SK-N-SH (cell line): ENCODE measurements at regions of chr1 and their contacts with region 1.

Region 1: DNA sequence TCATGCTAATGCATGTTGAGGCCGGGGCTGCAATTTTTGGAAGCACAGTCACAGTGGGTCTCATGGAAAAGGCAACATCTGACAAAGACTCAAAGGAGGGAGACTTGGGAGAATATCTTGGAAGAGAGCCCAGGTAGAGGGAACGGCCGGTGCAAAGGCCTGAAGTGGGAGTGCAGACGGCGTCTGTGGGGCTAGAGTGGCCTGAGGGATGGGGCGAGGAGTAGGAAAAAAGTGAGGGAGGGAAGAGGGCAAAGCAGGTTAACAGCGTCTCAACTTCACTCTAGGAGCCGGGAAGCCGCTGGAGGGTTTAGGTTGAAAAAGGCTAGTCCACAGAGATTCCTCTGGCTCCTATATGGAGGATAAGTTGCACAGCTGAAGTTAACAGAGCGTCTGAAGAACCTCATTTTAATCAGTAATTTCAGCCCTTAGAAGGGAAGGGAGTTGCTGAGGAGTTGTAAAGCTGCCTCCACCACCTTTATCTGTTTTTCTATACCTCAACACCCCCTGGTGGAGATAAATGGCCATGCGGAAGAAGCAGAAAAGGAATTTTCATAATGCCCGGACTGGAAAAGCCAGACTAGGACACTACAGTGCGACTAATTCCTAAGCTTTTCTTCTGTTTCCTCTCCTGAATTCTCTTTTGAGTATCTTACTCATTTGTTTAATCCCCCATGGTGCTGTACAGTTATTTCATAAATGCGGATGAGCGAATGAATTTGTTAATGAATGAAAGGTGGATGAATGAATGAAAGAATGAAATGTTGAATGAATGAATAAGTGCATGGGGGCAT is 78.7 kb upstream of the ZNF281 start:
- DNase-seq: peak; percentile 73
- H3K4me3 ChIP-seq: no peak overlapping the region
- H3K27ac ChIP-seq: no peak overlapping the region
- H3K4me1 ChIP-seq: peaks cover 2 to 4% of the 10 kb centered on the region in 2 experiments; a peak in 3 of 4 replicates
- H3K27me3 ChIP-seq: no peaks in the 10 kb centered on the region
- CTCF ChIP-seq: peak; percentile 94
- EP300 ChIP-seq: no peak
- RAD21 ChIP-seq: peak; percentile 96

Region 2: GRCh38 chr1:199684686-199685273 is 803.8 kb before region 1 on chr1:
- CTCF ChIA-PET with region 1: interaction called, 34 read pairs
- POLR2A ChIA-PET with region 1: no interaction called
- DNase-seq: peak; percentile 46
- H3K4me3 ChIP-seq: no peak overlapping the region; a peak in 1 of 4 replicates
- H3K27ac ChIP-seq: no peak overlapping the region
- H3K4me1 ChIP-seq: peaks cover 2 to 16% of the 10 kb centered on the region in 2 experiments; a peak in 2 of 4 replicates
- H3K27me3 ChIP-seq: no peaks in the 10 kb centered on the region
- CTCF ChIP-seq: peak; percentile 92
- EP300 ChIP-seq: no peak
- RAD21 ChIP-seq: peak; percentile 93

Region 3: DNA sequence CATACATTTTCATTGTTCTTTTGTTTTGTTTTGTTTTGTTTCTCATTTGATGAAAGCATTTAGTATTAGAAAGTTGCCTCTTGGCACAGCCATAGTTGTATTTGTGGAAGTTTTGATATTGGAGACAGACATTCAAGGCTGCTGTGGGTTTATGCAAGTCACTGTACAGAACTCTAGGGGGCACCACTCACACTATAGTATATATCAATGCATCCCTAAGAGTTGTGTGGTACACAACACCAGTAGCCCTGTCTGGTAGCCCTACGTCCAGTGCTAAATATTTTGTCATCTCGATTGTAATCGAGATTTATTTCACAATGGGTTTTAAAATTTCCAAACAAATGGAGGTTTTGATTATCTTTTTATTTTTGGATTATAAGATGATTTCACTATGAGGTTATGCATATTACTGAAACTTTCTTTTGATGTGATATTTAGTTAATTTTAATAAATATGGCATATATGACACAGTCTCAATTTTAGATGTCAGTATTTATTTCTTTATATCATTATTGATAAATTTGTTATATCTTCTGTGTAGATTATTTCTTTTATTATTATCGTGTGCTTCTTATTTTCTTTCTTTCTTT is 348.8 kb before region 1 on chr1:
- CTCF ChIA-PET with region 1: interaction called, 11 read pairs
- POLR2A ChIA-PET with region 1: no interaction called
- DNase-seq: peak; percentile 62
- H3K4me3 ChIP-seq: no peak overlapping the region
- H3K27ac ChIP-seq: no peak overlapping the region
- H3K4me1 ChIP-seq: no peaks in the 10 kb centered on the region
- H3K27me3 ChIP-seq: no peaks in the 10 kb centered on the region
- CTCF ChIP-seq: peak; percentile 83
- EP300 ChIP-seq: no peak
- RAD21 ChIP-seq: peak; percentile 72

Region 4: DNA sequence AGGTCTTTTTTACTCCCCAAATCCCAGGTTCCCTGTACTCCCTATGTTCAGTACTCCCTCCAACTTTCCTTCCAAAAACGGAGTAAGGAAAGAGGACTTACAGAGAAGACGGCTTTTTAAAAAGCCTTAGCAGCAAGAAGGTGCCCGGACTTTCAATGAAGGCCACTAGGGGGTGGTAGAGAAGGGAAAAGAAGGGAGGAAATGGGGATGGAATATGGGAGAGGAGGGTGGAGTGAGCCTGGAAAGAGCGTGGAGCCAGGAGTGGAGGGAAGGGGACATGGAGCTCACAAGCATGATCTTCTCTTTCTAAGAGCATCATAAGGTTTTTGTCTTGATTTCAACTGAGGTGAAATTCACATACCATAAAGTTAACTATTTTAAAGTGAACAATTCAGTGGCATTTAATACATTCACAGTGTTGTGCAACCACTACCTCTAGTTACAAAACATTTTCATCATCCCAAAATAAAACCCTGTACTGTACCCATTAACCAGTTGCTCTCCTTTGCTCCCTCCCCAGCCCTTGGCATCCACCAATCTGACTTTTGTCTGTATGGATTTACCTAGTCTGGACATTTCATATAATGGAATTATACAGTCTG is 208.7 kb before region 1 on chr1:
- CTCF ChIA-PET with region 1: interaction called, 41 read pairs
- POLR2A ChIA-PET with region 1: no interaction called
- DNase-seq: peak; percentile 62
- H3K4me3 ChIP-seq: no peak overlapping the region
- H3K27ac ChIP-seq: no peak overlapping the region
- H3K4me1 ChIP-seq: peaks cover 0 to 4% of the 10 kb centered on the region in 2 experiments; a peak in 1 of 4 replicates
- H3K27me3 ChIP-seq: no peaks in the 10 kb centered on the region
- CTCF ChIP-seq: peak; percentile 74
- EP300 ChIP-seq: no peak
- RAD21 ChIP-seq: peak; percentile 74

Region 5: DNA sequence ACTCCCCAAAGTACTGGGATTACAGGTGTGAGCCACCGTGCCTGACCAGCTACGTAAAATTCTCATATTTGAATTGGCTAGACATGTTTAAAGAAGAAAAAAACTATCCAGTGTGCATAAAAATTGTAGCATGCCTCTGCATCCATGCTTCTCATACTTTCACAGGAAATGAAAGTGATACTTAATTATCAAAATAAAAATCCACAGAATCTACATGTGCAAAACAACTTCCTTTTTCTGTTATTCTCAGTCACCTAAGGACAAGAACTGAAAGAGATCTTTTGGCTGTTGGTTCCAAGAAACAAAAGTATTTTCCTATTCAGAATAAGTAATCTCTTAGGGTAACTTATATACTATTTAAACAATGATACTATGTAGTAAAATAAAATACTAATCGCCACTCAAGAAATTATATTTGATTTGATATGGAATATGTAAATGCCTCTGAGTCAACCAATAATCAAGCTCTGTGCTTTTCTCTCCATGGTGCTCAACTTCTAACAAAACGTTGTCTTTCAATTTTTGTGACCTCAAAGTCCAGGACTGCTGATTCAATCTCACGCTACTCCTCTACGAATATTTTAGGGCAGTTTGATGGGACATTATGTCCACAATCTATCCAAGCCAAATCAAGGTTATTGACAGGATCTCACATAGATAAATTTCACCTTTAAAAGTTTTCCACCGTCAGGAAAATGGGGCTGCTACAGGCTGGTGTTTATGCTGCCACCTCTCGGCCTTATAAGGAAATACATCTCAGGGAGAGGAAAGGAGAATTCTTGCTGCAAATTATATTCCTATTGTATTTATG is 181.4 kb before region 1 on chr1:
- CTCF ChIA-PET with region 1: interaction called, 12 read pairs
- POLR2A ChIA-PET with region 1: no interaction called
- DNase-seq: peak; percentile 61
- H3K4me3 ChIP-seq: no peak overlapping the region
- H3K27ac ChIP-seq: no peak overlapping the region
- H3K4me1 ChIP-seq: peaks cover 0 to 3% of the 10 kb centered on the region in 2 experiments; a peak in 1 of 4 replicates
- H3K27me3 ChIP-seq: no peaks in the 10 kb centered on the region
- CTCF ChIP-seq: peak; percentile 90
- EP300 ChIP-seq: no peak
- RAD21 ChIP-seq: peak; percentile 63

Region 6: DNA sequence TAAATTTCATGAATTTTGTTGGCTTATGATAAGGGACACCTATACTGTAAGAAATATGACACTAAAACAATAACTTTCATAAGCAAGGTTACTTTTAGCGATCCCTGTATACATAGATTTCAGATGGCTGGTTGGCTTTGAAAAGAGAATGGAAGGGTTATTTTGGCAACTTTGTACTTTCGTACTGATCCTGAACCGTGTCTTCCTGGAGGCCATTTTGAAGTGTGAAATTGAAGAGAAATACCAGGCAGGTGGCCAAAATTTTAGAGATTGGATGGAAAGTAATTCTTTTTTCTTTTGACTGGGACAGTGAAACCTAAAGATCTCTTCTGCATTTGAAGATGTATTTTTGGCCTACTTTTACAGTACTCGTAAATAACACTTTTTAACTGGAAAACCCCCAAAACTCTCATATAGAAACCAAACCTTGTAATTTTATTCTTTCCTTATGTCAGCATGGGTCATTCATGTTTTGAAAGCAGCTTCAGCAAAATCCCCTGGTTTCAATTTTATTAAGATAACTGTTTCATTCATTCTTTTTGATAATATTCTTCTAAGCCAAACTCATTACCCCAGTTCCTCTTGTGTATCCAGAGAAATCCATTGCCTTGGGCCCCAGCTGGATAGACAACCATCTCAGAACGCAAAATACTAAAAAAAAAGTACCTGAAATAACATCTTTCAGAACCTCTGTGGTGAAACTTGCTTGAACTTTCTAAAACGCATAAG is 40.4 kb before region 1 on chr1:
- CTCF ChIA-PET with region 1: no interaction called
- POLR2A ChIA-PET with region 1: no interaction called
- DNase-seq: no peak
- H3K4me3 ChIP-seq: no peak overlapping the region
- H3K27ac ChIP-seq: no peak overlapping the region
- H3K4me1 ChIP-seq: no peaks in the 10 kb centered on the region
- H3K27me3 ChIP-seq: no peaks in the 10 kb centered on the region
- CTCF ChIP-seq: no peak
- EP300 ChIP-seq: no peak
- RAD21 ChIP-seq: no peak

Region 7: GRCh38 chr1:200473698-200474371 is 14.7 kb before region 1 on chr1:
- CTCF ChIA-PET with region 1: interaction called, 19 read pairs
- POLR2A ChIA-PET with region 1: no interaction called
- DNase-seq: peak; percentile 82
- H3K4me3 ChIP-seq: peak overlapping the region in 1 of 2 experiments; percentile 21; a peak in 2 of 4 replicates
- H3K27ac ChIP-seq: peak overlapping the region; percentile 42 to 95; a peak in 3 of 4 replicates
- H3K4me1 ChIP-seq: peaks cover 0 to 15% of the 10 kb centered on the region in 2 experiments; a peak in 2 of 4 replicates
- H3K27me3 ChIP-seq: no peaks in the 10 kb centered on the region
- CTCF ChIP-seq: no peak
- EP300 ChIP-seq: peak; percentile 14 to 97; a peak in 3 of 4 replicates
- RAD21 ChIP-seq: peak; percentile 31